Activated naive CD4-positive, alpha-beta T cell treated with anti-CD3 and anti-CD28 coated beads for 36 hours (primary cell): ENCODE measurements at regions of chr14 and their contacts with region 1.

Region 1: DNA sequence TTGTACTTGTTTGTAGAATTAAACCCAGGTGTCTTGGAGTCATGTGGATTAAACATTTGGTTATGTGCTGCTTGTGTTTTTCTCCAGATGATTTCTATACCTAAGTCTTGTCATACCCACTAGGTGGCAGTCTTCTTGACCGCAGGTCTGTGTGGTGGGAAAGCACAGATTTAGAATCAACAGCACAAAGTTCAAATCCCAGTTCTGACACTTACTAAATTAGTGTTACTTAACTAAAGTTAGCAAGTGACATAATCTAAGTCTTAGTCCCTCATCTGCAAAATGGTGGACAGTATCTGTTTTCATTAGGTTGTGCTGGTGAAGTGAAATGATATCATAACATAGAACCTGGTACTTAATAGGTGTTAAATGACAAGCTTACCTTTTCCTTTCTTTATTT is 151.0 kb upstream of the ARHGAP5 start:
- DNase-seq: peak; percentile 28
- H3K4me3 Mint-ChIP-seq: no peak overlapping the region
- H3K27ac Mint-ChIP-seq: no peak overlapping the region
- H3K4me1 Mint-ChIP-seq: peaks cover 21% of the 10 kb centered on the region
- H3K27me3 Mint-ChIP-seq: no peaks in the 10 kb centered on the region

Region 2: GRCh38 chr14:31510222-31510621 is 415.9 kb before region 1 on chr14:
- CTCF ChIA-PET with region 1: interaction called, 5 read pairs
- intact Hi-C with region 1: loop called (anchors 2 kb)
- DNase-seq: no peak
- H3K4me3 Mint-ChIP-seq: no peak overlapping the region
- H3K27ac Mint-ChIP-seq: no peak overlapping the region
- H3K4me1 Mint-ChIP-seq: no peaks in the 10 kb centered on the region
- H3K27me3 Mint-ChIP-seq: no peaks in the 10 kb centered on the region

Region 3: GRCh38 chr14:31561155-31561846 is 364.8 kb before region 1 on chr14 and contains the start of gene NUBPL:
- CTCF ChIA-PET with region 1: no interaction called
- intact Hi-C with region 1: loop called (anchors 5 kb)
- DNase-seq: peak; percentile 98
- H3K4me3 Mint-ChIP-seq: peak within 1 kb of the TSS; percentile 96
- H3K27ac Mint-ChIP-seq: peak within 1 kb of the TSS; percentile 92
- H3K4me1 Mint-ChIP-seq: peaks cover 23% of the 10 kb centered on the region
- H3K27me3 Mint-ChIP-seq: no peaks in the 10 kb centered on the region
- total RNA-seq, gene NUBPL: 11.5 to 13.5 TPM

Region 4: DNA sequence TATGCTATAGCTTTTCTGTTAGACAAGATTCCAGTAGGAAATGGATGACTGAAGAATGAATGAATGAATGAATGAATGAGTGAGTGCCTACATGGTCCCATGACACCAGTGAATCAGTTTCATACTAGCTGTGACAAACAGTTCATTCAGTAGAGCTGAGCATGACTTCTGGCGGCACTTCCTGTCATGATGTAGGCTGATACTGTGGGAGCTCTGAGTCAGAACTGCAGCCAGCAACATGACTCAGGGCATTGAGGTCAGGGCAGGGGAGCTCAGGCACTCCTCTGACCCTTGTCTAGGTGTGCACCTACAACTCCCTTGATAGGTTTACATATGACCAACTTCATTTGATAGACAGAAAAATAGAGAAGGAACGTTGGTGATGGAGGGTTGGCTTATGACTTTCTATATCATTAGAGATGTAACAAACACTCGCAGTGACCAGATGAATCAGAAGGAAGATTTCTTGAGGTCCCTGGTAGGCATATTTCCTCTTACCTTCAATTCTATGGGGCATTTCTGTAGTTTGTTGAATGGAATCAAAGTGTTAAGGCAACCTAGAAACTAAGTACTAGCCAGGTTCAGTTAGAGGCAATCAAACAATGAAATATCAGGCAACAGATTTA is 11.7 kb after region 1 on chr14:
- CTCF ChIA-PET with region 1: interaction called, 8 read pairs
- intact Hi-C with region 1: loop called (anchors 1 kb)
- DNase-seq: peak; percentile 89
- H3K4me3 Mint-ChIP-seq: no peak overlapping the region
- H3K27ac Mint-ChIP-seq: peak overlapping the region; percentile 20
- H3K4me1 Mint-ChIP-seq: peaks cover 20% of the 10 kb centered on the region
- H3K27me3 Mint-ChIP-seq: no peaks in the 10 kb centered on the region

Region 5: GRCh38 chr14:32382704-32383103 is 456.6 kb after region 1 on chr14:
- CTCF ChIA-PET with region 1: no interaction called
- intact Hi-C with region 1: loop called (anchors 10 kb)
- DNase-seq: no peak
- H3K4me3 Mint-ChIP-seq: no peak overlapping the region
- H3K27ac Mint-ChIP-seq: no peak overlapping the region
- H3K4me1 Mint-ChIP-seq: peaks cover 19% of the 10 kb centered on the region
- H3K27me3 Mint-ChIP-seq: no peaks in the 10 kb centered on the region

Region 6: DNA sequence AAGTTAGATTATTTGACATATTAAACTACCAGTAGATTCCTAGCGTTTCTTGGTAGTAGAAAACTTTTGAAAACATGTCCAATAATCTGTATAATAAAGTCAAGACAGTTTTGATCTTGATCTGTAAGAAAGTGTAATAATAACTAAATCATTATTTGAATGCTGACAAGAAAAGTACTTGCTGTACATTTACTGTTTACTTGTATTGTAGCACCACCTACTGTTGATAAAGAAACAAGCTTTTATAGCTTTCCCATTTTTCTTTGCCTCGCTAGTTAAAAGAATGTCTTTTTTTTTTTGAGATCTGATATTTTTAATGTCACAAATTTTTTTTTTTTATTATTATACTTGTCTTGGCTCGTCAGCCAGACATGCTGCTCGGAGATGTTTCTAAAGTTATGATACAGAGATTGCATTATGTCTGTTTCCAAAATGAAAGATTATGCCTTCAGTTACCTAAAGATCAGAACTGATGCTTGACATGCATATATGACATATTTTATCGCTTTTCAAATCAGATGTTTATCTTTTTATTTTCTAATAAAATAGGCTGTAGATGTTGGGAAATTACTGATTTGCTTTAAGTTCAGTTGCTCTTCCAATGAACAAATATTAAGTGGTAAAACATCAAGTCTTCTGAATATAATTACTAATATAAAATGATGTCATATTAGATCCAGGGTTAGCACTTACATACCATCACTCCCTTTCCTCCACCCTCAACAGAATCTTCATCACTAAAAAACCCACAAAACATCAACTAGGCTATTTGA is 543.5 kb after region 1 on chr14:
- CTCF ChIA-PET with region 1: interaction called, 3 read pairs
- intact Hi-C with region 1: loop called (anchors 2 kb)
- DNase-seq: no peak
- H3K4me3 Mint-ChIP-seq: no peak overlapping the region
- H3K27ac Mint-ChIP-seq: no peak overlapping the region
- H3K4me1 Mint-ChIP-seq: no peaks in the 10 kb centered on the region
- H3K27me3 Mint-ChIP-seq: no peaks in the 10 kb centered on the region

Region 7: GRCh38 chr14:32560209-32560857 is 634.2 kb after region 1 on chr14:
- CTCF ChIA-PET with region 1: no interaction called
- intact Hi-C with region 1: loop called (anchors 2 kb)
- DNase-seq: peak; percentile 64
- H3K4me3 Mint-ChIP-seq: no peak overlapping the region
- H3K27ac Mint-ChIP-seq: no peak overlapping the region
- H3K4me1 Mint-ChIP-seq: peaks cover 12% of the 10 kb centered on the region
- H3K27me3 Mint-ChIP-seq: no peaks in the 10 kb centered on the region